CD4-positive, alpha-beta memory T cell (primary cell): ENCODE measurements at regions of chr19 and their contacts with region 1.

Region 1: DNA sequence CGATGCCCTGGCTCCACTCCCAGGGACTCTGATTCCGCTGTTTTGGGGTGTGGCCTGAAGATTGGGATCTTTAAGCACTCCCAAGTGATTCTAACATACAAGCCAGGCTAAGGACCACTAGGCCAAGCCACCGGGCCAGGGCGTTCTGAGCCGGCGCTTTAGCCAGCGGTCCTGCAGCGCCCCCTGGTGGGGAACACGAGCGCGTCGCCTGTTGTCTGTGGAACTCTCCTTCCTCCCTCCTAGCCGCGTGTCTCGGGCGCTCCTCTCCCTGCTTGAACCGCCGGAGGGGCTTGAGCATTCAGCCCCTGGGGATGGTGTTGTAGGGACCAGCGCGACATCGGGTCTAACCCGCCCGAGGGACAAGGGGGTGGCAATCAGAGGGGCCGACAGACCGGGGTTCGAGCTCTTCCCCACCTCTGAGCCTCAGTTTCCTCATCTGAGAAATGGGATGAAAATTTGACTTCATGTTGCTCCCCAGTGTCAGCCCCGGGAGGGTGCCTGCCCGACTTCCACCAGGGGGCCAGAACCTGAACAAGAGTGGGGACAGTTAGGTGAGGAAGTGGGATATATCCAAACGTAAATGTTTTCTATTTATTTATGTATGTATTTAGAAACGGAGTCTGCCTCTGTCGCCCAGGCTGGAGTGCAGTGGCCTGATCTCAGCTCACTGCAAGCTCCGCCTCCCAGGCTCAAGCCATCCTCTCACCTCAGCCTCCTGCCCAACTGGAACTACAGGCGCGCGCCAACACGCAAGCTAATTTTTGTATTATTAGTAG is 18.0 kb upstream of the PNMA8B start:
- DNase-seq: peak in 4 of 5 donors; percentile 64 to 72 (median 68)
- H3K4me3 ChIP-seq: no peak overlapping the region
- H3K4me3 Mint-ChIP-seq: no peak overlapping the region
- H3K27ac ChIP-seq: no peak overlapping the region
- H3K27ac Mint-ChIP-seq: no peak overlapping the region
- H3K4me1 ChIP-seq: peaks cover 10% of the 10 kb centered on the region
- H3K4me1 Mint-ChIP-seq: peaks cover 7 to 19% (median 10%) of the 10 kb centered on the region in 4 donors
- H3K27me3 ChIP-seq: peaks cover 3% of the 10 kb centered on the region
- H3K27me3 Mint-ChIP-seq: peaks cover 14 to 20% of the 10 kb centered on the region in 2 donors

Region 2: DNA sequence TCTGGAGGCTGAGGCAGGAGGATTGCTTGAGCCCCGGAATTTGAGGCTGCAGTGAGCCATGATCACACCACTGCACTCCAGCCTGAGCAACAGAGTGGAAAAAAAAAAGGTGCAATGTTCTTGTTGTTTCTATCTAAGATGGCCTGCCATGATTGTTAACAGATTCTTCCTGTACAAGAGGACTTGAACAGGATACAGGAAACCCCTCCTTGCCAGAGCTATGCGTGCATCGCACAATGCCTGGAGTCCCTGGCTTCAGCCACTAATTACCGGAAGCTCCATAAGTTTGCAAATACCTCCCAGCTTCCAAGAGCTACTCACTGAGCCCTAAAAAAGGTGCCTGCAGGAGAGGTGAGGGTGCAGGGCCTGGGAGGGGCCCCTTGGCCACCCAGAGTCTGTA is 229.9 kb before region 1 on chr19:
- CTCF ChIA-PET with region 1: no interaction called
- POLR2A ChIA-PET with region 1: no interaction called
- intact Hi-C with region 1: loop called (anchors 1 kb)
- DNase-seq: no peak
- H3K4me3 ChIP-seq: no peak overlapping the region
- H3K4me3 Mint-ChIP-seq: no peak overlapping the region
- H3K27ac ChIP-seq: no peak overlapping the region
- H3K27ac Mint-ChIP-seq: no peak overlapping the region
- H3K4me1 ChIP-seq: no peaks in the 10 kb centered on the region
- H3K4me1 Mint-ChIP-seq: peaks cover 0 to 3% (median under 1%) of the 10 kb centered on the region in 4 donors
- H3K27me3 ChIP-seq: no peaks in the 10 kb centered on the region
- H3K27me3 Mint-ChIP-seq: peaks cover 4 to 10% of the 10 kb centered on the region in 2 donors

Region 3: GRCh38 chr19:46392243-46392801 is 121.3 kb before region 1 on chr19:
- CTCF ChIA-PET with region 1: interaction called, 11 read pairs
- POLR2A ChIA-PET with region 1: no interaction called
- intact Hi-C with region 1: loop called (anchors 1 kb)
- DNase-seq: no peak
- H3K4me3 ChIP-seq: no peak overlapping the region
- H3K4me3 Mint-ChIP-seq: no peak overlapping the region
- H3K27ac ChIP-seq: no peak overlapping the region
- H3K27ac Mint-ChIP-seq: peak overlapping the region in 2 of 7 donors; percentile 46 to 64
- H3K4me1 ChIP-seq: no peaks in the 10 kb centered on the region
- H3K4me1 Mint-ChIP-seq: peaks cover 3 to 10% (median 4%) of the 10 kb centered on the region in 4 donors
- H3K27me3 ChIP-seq: no peaks in the 10 kb centered on the region
- H3K27me3 Mint-ChIP-seq: peaks cover 0 to 2% of the 10 kb centered on the region in 2 donors

Region 4: GRCh38 chr19:46404055-46404752 is 109.4 kb before region 1 on chr19:
- CTCF ChIA-PET with region 1: interaction called, 3 read pairs
- POLR2A ChIA-PET with region 1: no interaction called
- intact Hi-C with region 1: loop called (anchors 1 kb)
- DNase-seq: no peak
- H3K4me3 ChIP-seq: no peak overlapping the region
- H3K4me3 Mint-ChIP-seq: peak overlapping the region; percentile 12 to 86 (median 64)
- H3K27ac ChIP-seq: no peak overlapping the region
- H3K27ac Mint-ChIP-seq: no peak overlapping the region
- H3K4me1 ChIP-seq: peaks cover 15% of the 10 kb centered on the region
- H3K4me1 Mint-ChIP-seq: peaks cover 14 to 29% (median 19%) of the 10 kb centered on the region in 4 donors
- H3K27me3 ChIP-seq: peaks cover 32% of the 10 kb centered on the region
- H3K27me3 Mint-ChIP-seq: peaks cover 44 to 59% of the 10 kb centered on the region in 2 donors

Region 5: GRCh38 chr19:46487802-46488445 is 25.7 kb before region 1 on chr19:
- CTCF ChIA-PET with region 1: no interaction called
- POLR2A ChIA-PET with region 1: no interaction called
- intact Hi-C with region 1: no loop called
- DNase-seq: peak; percentile 60 to 71 (median 61)
- H3K4me3 ChIP-seq: no peak overlapping the region
- H3K4me3 Mint-ChIP-seq: peak overlapping the region in 1 of 8 donors; percentile 63
- H3K27ac ChIP-seq: no peak overlapping the region
- H3K27ac Mint-ChIP-seq: no peak overlapping the region
- H3K4me1 ChIP-seq: peaks cover 20% of the 10 kb centered on the region
- H3K4me1 Mint-ChIP-seq: peaks cover 9 to 57% (median 12%) of the 10 kb centered on the region in 4 donors
- H3K27me3 ChIP-seq: peaks cover 39% of the 10 kb centered on the region
- H3K27me3 Mint-ChIP-seq: peaks cover 45 to 60% of the 10 kb centered on the region in 2 donors

Region 6: GRCh38 chr19:46537136-46538097 is 23.8 kb after region 1 on chr19:
- CTCF ChIA-PET with region 1: interaction called, 77 read pairs
- POLR2A ChIA-PET with region 1: no interaction called
- intact Hi-C with region 1: loop called (anchors 1 kb)
- DNase-seq: peak in 4 of 5 donors; percentile 45 to 53 (median 48)
- H3K4me3 ChIP-seq: no peak overlapping the region
- H3K4me3 Mint-ChIP-seq: no peak overlapping the region
- H3K27ac ChIP-seq: no peak overlapping the region
- H3K27ac Mint-ChIP-seq: peak overlapping the region in 1 of 7 donors; percentile 1
- H3K4me1 ChIP-seq: peaks cover under 1% of the 10 kb centered on the region
- H3K4me1 Mint-ChIP-seq: peaks cover under 1 to 5% (median 3%) of the 10 kb centered on the region in 4 donors
- H3K27me3 ChIP-seq: no peaks in the 10 kb centered on the region
- H3K27me3 Mint-ChIP-seq: peaks cover 0 to 5% of the 10 kb centered on the region in 2 donors

Region 7: GRCh38 chr19:46542428-46543230 is 29.0 kb after region 1 on chr19:
- CTCF ChIA-PET with region 1: interaction called, 77 read pairs
- POLR2A ChIA-PET with region 1: interaction called, 4 read pairs
- intact Hi-C with region 1: loop called (anchors 1 kb)
- DNase-seq: peak; percentile 62 to 81 (median 66)
- H3K4me3 ChIP-seq: no peak overlapping the region
- H3K4me3 Mint-ChIP-seq: no peak overlapping the region
- H3K27ac ChIP-seq: no peak overlapping the region
- H3K27ac Mint-ChIP-seq: peak overlapping the region in 1 of 7 donors; percentile 16
- H3K4me1 ChIP-seq: peaks cover 3% of the 10 kb centered on the region
- H3K4me1 Mint-ChIP-seq: peaks cover 1 to 6% (median 5%) of the 10 kb centered on the region in 4 donors
- H3K27me3 ChIP-seq: no peaks in the 10 kb centered on the region
- H3K27me3 Mint-ChIP-seq: peaks cover 0 to under 1% of the 10 kb centered on the region in 2 donors

Region 8: DNA sequence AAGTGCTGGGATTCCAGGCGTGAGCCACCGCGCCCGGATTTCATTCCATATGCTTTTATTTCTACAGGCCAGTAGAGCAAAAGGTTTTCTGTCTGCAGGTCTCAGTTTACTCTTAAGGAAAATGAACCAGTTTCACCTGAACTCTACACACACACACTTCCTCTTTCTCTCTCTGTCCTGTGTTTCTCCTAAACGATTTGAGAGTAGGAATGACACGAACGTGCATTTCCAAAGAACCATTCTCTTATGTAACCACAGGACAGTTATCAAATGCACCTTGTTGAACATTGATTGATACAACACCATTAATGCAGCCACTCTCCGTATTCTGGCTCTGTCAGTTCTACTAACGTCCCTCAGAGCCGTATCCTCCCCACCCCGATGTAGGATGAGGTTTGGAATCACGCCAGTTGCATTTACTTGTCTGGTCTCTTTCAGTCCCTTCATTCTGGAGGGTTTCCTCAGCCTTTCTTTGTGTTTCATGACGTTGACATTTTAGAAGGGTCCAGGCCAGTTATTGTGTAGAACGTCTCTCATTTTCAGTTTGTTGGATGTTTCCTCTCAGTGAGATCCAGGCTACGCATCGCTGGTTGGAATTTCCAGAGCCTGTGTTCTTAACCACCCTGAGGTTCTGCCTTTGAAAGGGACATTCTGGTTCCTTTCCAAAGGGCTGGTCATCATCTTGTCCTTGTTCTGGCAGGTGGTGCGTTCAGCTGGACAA is 1131.3 kb after region 1 on chr19:
- CTCF ChIA-PET with region 1: no interaction called
- POLR2A ChIA-PET with region 1: no interaction called
- intact Hi-C with region 1: no loop called
- DNase-seq: no peak
- H3K4me3 ChIP-seq: no peak overlapping the region
- H3K4me3 Mint-ChIP-seq: no peak overlapping the region
- H3K27ac ChIP-seq: no peak overlapping the region
- H3K27ac Mint-ChIP-seq: peak overlapping the region in 1 of 7 donors; percentile 76
- H3K4me1 ChIP-seq: no peaks in the 10 kb centered on the region
- H3K4me1 Mint-ChIP-seq: peaks cover 27 to 54% (median 32%) of the 10 kb centered on the region in 4 donors
- H3K27me3 ChIP-seq: no peaks in the 10 kb centered on the region
- H3K27me3 Mint-ChIP-seq: no peaks in the 10 kb centered on the region